Activated naive CD8-positive, alpha-beta T cell treated with anti-CD3 and anti-CD28 coated beads, Interleukin-2, amount 10 ng/mL, durations not matched to agents 7 days and 5 days (primary cell): ENCODE measurements at regions of chr5 and their contacts with region 1.

Region 1: GRCh38 chr5:142108432-142109330 is at the start of gene NDFIP1:
- DNase-seq: peak; percentile 93
- ATAC-seq: peak; percentile 88
- H3K4me3 Mint-ChIP-seq: peak within 1 kb of the TSS; percentile 95
- H3K27ac Mint-ChIP-seq: peak within 1 kb of the TSS; percentile 97
- H3K4me1 Mint-ChIP-seq: peaks cover 55% of the 10 kb centered on the region
- H3K27me3 Mint-ChIP-seq: no peaks in the 10 kb centered on the region
- total RNA-seq, gene NDFIP1: 59.2 to 62.3 TPM

Region 2: DNA sequence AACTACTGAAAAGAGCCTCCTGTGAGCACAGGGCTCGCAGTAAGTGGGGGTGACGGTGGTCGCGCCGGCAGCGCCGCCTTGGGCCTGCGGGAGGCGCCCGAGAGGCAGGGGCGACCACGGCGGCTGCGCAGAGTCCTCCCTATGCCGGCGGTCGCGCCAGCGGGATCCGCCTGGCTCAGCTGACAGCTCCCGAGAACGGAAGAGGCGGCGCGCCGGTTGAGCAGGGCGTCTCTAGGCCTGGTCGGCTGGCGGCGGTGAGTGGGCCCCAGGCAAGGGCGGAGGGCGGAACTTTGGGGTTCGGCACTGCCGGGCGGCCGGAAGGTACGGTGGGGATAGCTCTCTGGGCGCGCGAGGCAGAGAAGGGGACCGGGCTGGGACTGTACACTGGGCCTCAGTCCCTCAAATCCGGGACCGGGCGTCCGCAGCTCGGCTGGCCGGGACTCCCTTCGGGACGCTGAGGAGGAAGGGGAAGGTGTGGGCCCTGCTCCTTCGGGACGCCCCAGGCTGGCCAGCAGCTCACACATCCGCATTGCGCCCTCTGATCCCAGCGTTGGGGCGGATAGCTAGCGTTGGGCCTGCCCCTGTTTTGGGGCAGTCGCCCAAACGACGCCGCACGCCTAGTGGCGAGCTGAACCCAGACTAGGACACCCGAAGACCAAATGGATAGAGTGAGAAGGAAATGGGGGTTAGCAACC is 139.6 kb before region 1 on chr5 and contains the start of gene RNF14:
- POLR2A ChIA-PET with region 1: interaction called, 17 read pairs
- DNase-seq: peak; percentile 97
- ATAC-seq: peak; percentile 95
- H3K4me3 Mint-ChIP-seq: peak within 1 kb of the TSS; percentile 97
- H3K27ac Mint-ChIP-seq: peak within 1 kb of the TSS; percentile 97
- H3K4me1 Mint-ChIP-seq: peaks cover 25% of the 10 kb centered on the region
- H3K27me3 Mint-ChIP-seq: no peaks in the 10 kb centered on the region
- total RNA-seq, gene RNF14: 29.0 to 33.9 TPM

Region 3: GRCh38 chr5:142012792-142013388 is 95.8 kb before region 1 on chr5 and contains the start of gene GNPDA1:
- POLR2A ChIA-PET with region 1: interaction called, 63 read pairs
- DNase-seq: peak; percentile 83
- ATAC-seq: peak; percentile 47
- H3K4me3 Mint-ChIP-seq: peak within 1 kb of the TSS; percentile 89
- H3K27ac Mint-ChIP-seq: peak within 1 kb of the TSS; percentile 94
- H3K4me1 Mint-ChIP-seq: peaks cover 73% of the 10 kb centered on the region
- H3K27me3 Mint-ChIP-seq: no peaks in the 10 kb centered on the region
- total RNA-seq, gene GNPDA1: 38.2 to 40.5 TPM

Region 4: GRCh38 chr5:142046191-142046590 is 62.5 kb before region 1 on chr5:
- POLR2A ChIA-PET with region 1: no interaction called
- DNase-seq: no peak
- ATAC-seq: no peak
- H3K4me3 Mint-ChIP-seq: no peak overlapping the region
- H3K27ac Mint-ChIP-seq: no peak overlapping the region
- H3K4me1 Mint-ChIP-seq: no peaks in the 10 kb centered on the region
- H3K27me3 Mint-ChIP-seq: no peaks in the 10 kb centered on the region

Region 5: DNA sequence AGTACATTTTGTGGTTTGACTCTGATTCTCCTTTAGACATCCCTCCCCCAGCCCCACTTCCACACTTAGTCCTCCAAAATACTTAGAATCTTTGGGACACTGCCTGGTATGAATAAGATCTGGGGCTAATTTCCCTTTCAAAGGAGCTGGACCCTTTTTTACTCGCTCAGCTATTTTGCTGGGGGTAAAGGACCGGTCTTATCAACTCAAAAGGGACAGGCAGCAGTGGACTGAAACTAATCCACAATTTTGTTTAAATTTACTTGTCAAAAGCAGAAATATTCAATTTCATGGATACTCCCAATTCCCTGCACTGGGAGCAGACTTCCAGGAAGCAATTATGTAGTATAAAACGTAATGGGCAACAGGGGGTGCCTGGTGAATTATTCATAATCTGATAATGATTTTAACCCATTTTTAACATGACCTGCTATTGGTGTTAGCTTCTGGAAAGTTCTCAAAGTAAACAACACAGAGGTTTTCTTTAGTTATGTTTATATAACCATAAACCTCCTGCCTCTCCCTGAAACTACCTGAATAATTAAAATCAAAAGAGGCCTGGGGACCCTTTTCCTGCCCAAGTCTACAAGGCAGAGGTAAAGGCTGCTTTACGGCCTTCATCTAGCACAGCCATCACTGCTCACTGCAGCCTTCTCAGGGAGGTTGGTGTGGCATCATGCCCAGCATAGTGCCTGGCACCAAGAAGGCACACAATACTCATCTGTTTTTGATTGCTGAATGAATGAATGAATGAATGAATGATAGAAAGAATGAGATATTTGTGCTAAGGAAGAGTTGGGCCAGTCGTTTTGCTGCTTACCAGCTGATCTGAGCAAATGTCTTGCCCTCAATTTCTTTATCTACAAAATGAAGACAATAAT is 51.6 kb before region 1 on chr5:
- POLR2A ChIA-PET with region 1: no interaction called
- DNase-seq: no peak
- ATAC-seq: no peak
- H3K4me3 Mint-ChIP-seq: no peak overlapping the region
- H3K27ac Mint-ChIP-seq: no peak overlapping the region
- H3K4me1 Mint-ChIP-seq: peaks cover 10% of the 10 kb centered on the region
- H3K27me3 Mint-ChIP-seq: no peaks in the 10 kb centered on the region

Region 6: GRCh38 chr5:142095651-142096330 is 12.9 kb before region 1 on chr5:
- POLR2A ChIA-PET with region 1: interaction called, 42 read pairs
- DNase-seq: peak; percentile 55
- ATAC-seq: peak; percentile 88
- H3K4me3 Mint-ChIP-seq: peak overlapping the region; percentile 54
- H3K27ac Mint-ChIP-seq: peak overlapping the region; percentile 89
- H3K4me1 Mint-ChIP-seq: peaks cover 41% of the 10 kb centered on the region
- H3K27me3 Mint-ChIP-seq: no peaks in the 10 kb centered on the region

Region 7: GRCh38 chr5:142128675-142129208 is 20.1 kb after region 1 on chr5:
- POLR2A ChIA-PET with region 1: interaction called, 23 read pairs
- DNase-seq: no peak
- ATAC-seq: peak; percentile 84
- H3K4me3 Mint-ChIP-seq: peak overlapping the region; percentile 63
- H3K27ac Mint-ChIP-seq: peak overlapping the region; percentile 78
- H3K4me1 Mint-ChIP-seq: peaks cover 32% of the 10 kb centered on the region
- H3K27me3 Mint-ChIP-seq: no peaks in the 10 kb centered on the region

Region 8: DNA sequence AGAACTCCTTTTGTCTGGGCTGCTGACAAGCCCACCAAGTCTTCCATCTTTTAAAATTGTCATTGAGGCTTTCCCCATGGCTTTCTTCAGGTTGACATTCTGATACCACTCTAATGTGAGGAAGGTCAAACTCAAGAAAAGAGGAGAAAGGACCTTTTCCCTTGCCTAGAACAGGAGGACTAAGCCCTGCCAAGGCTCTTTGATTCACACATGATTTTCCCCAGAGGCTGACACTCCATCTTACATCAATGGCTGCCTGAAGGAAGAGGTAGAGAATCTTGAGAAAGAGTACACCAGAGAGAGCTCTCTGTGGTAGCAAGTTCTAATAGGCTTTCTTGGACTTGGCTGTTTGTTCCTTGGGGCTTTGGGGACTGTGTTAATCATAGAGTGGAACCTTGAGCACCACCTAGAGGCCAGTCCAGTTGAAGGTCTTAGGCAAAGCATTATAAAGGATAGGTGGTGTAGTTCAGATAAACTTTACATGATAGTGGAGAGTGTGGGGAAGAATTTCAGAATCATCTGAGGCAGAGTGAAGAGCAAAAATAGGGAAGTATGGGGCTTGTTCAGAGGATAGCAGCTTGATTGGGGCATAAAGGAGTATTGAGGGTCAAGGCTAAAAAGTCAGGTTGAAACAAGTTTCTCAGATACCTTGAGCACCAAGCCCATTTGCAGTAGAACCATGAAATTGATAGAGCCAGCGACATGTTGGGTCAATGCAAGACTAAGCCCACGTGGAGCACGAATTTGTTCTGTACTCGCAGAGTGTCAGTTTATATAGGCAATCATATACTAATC is 36.6 kb after region 1 on chr5:
- POLR2A ChIA-PET with region 1: no interaction called
- DNase-seq: no peak
- ATAC-seq: peak; percentile 83
- H3K4me3 Mint-ChIP-seq: no peak overlapping the region
- H3K27ac Mint-ChIP-seq: no peak overlapping the region
- H3K4me1 Mint-ChIP-seq: no peaks in the 10 kb centered on the region
- H3K27me3 Mint-ChIP-seq: no peaks in the 10 kb centered on the region